Mammary epithelial cell (primary cell): ENCODE measurements at regions of chr1 and their contacts with region 1.

Region 1: GRCh38 chr1:29579821-29580425 is 343.6 kb downstream of the PTPRU start:
- DNase-seq: peak; percentile 65
- H3K4me3 ChIP-seq: no peak overlapping the region
- H3K27ac ChIP-seq: no peak overlapping the region
- H3K4me1 ChIP-seq: peaks cover 68% of the 10 kb centered on the region
- H3K27me3 ChIP-seq: no peaks in the 10 kb centered on the region
- CTCF ChIP-seq: no peak

Region 2: DNA sequence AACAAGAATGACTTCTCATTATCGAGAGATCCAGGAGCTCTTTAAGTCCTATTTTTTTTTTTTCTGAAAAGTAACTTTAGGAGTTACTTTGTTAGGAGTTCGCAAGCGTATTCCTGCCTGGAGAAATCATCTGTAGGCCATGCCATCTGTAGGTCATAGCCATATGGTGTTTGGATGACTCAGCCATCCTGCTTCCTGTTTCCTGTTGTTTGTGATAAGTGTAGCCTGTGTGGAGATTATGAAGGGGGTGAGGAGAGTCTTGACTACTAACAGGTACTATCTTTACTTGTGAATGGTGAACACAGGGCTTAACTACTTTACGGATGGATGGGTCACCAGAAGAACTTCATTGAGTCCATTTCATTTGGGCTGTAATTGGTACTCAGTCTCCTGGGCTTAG is 16.4 kb before region 1 on chr1:
- CTCF ChIA-PET with region 1: interaction called, 12 read pairs
- dilution Hi-C with region 1: no loop called
- in situ Hi-C with region 1: no loop called
- intact Hi-C with region 1: no loop called
- DNase-seq: peak; percentile 24
- H3K4me3 ChIP-seq: no peak overlapping the region
- H3K27ac ChIP-seq: no peak overlapping the region
- H3K4me1 ChIP-seq: peaks cover 11% of the 10 kb centered on the region
- H3K27me3 ChIP-seq: no peaks in the 10 kb centered on the region
- CTCF ChIP-seq: no peak